ENCODE measurements at regions of chr19 and their contacts with region 1.

Region 1: GRCh38 chr19:29761575-29762232 is 46.6 kb upstream of the C19orf12 start:
- DNase-seq: no peak
- H3K4me3 ChIP-seq: no peak overlapping the region
- H3K27ac ChIP-seq: no peak overlapping the region
- H3K4me1 ChIP-seq: no peaks in the 10 kb centered on the region; a peak in 1 of 4 replicates
- H3K27me3 ChIP-seq: no peaks in the 10 kb centered on the region
- CTCF ChIP-seq: no peak
- EP300 ChIP-seq: no peak
- RAD21 ChIP-seq: no peak

Region 2: GRCh38 chr19:29704562-29705558 is 56.8 kb before region 1 on chr19:
- CTCF ChIA-PET with region 1: no interaction called
- POLR2A ChIA-PET with region 1: no interaction called
- DNase-seq: no peak
- H3K4me3 ChIP-seq: no peak overlapping the region
- H3K27ac ChIP-seq: no peak overlapping the region
- H3K4me1 ChIP-seq: no peaks in the 10 kb centered on the region; a peak in 1 of 4 replicates
- H3K27me3 ChIP-seq: no peaks in the 10 kb centered on the region
- CTCF ChIP-seq: no peak
- EP300 ChIP-seq: no peak
- RAD21 ChIP-seq: no peak

Region 3: DNA sequence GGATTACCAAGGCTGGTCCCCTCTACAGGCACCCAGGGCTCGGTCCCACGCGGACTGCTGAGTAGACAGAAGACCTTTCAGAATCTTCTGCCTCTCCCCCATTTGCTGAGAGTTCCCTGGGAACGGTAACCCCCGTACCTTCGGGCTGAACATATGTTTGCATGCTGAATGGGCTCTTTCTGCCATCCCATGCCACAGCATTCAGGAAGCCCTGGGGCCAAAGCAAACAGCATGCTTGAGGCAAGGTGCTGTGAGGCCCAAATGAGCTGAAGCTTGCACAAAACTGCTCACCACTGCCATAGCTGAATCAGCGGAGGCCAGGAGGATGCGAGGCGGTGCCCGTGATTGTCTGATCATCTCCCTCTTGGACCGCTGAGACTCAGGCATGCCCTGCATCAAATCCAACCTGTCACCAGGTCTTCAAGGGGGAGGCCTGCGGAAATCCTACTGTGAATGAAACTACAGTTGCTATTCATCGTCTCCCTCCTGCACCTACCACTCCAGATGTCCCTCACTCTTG is 30.3 kb before region 1 on chr19:
- CTCF ChIA-PET with region 1: interaction called, 14 read pairs
- POLR2A ChIA-PET with region 1: no interaction called
- DNase-seq: no peak
- H3K4me3 ChIP-seq: no peak overlapping the region
- H3K27ac ChIP-seq: no peak overlapping the region
- H3K4me1 ChIP-seq: no peaks in the 10 kb centered on the region
- H3K27me3 ChIP-seq: no peaks in the 10 kb centered on the region; the same call in 1 of the 2 replicates
- CTCF ChIP-seq: no peak
- EP300 ChIP-seq: no peak
- RAD21 ChIP-seq: no peak

Region 4: DNA sequence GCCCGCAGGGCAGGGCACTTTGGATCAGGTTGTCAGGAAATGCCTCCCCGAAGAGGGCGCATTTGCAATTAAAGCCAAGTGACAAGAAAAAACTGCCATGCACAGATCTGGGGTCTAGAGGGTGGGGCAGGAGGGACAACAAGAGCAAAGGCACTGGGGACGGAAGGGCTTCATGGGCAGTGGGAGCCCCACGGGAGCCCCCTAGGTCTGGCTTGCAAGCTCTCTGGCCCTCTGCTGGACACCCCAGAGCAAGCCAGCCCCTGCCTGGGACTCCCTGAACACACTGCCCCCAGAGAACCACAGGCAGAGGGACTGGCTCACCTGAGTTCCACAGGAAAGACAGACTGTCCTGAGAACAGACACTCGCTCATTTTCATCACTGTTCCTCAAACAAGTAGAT is 16.5 kb before region 1 on chr19:
- CTCF ChIA-PET with region 1: interaction called, 25 read pairs
- POLR2A ChIA-PET with region 1: no interaction called
- DNase-seq: peak; percentile 40
- H3K4me3 ChIP-seq: no peak overlapping the region
- H3K27ac ChIP-seq: no peak overlapping the region
- H3K4me1 ChIP-seq: no peaks in the 10 kb centered on the region
- H3K27me3 ChIP-seq: no peaks in the 10 kb centered on the region; the same call in 1 of the 2 replicates
- CTCF ChIP-seq: peak; percentile 29
- EP300 ChIP-seq: no peak
- RAD21 ChIP-seq: no peak

Region 5: GRCh38 chr19:29844891-29845572 is 83.3 kb after region 1 on chr19:
- CTCF ChIA-PET with region 1: interaction called, 12 read pairs
- POLR2A ChIA-PET with region 1: no interaction called
- DNase-seq: no peak
- H3K4me3 ChIP-seq: peak overlapping the region; percentile 67 to 77
- H3K27ac ChIP-seq: peak overlapping the region; percentile 27 to 63; a peak in 3 of 4 replicates
- H3K4me1 ChIP-seq: peaks cover 0 to 11% of the 10 kb centered on the region in 2 experiments; a peak in 1 of 4 replicates
- H3K27me3 ChIP-seq: no peaks in the 10 kb centered on the region
- CTCF ChIP-seq: 0 out of 2 replicates have a peak, but pooled peaks have one; percentile 12
- EP300 ChIP-seq: no peak
- RAD21 ChIP-seq: no peak

Region 6: DNA sequence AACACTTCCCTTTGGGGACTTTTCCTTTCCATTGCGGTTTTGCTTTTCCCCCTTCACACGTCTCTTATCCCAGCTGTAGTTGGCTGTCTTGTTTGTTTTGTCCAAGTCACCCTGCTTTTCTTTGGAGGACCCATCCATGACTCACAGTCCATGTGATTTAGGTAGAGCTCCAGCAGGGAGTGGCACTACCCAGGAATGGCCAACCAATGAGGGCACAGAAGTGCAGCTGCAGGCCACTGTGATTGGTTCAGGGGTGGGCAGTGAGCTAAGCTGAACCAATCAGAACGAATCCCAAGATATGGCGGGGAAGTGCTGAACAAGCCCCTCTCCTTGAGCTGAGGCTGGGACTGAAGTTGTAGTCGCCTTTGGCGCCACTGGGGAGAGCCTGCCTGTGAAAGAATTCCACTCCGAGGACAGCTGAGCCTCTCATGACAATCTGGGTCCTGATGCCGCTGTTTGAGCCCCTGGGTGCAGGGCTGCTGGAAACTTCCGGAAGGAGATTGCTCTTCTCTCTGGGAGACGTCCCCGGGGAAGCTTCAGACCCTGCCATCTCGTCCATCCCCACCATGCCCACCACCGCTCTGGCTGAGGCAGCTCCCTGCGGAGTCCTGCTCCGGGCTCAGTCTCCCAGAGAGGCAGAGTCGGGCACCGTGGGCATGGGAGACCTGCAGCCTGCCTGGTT is 117.4 kb after region 1 on chr19:
- CTCF ChIA-PET with region 1: interaction called, 57 read pairs
- POLR2A ChIA-PET with region 1: no interaction called
- DNase-seq: peak; percentile 91
- H3K4me3 ChIP-seq: peak overlapping the region; percentile 46 to 63
- H3K27ac ChIP-seq: no peak overlapping the region
- H3K4me1 ChIP-seq: peaks cover 0 to 6% of the 10 kb centered on the region in 2 experiments; a peak in 1 of 4 replicates
- H3K27me3 ChIP-seq: no peaks in the 10 kb centered on the region; the same call in 1 of the 2 replicates
- CTCF ChIP-seq: no peak
- EP300 ChIP-seq: no peak
- RAD21 ChIP-seq: no peak

Measured in SK-N-SH (cell line).